HEK293 (cell line): ENCODE measurements at regions of chr17 and their contacts with region 1.

Region 1: GRCh38 chr17:39235555-39236449 is 10.1 kb upstream of the STAC2 start:
- H3K4me3 ChIP-seq: no peak overlapping the region
- H3K27ac ChIP-seq: no peak overlapping the region
- H3K4me1 ChIP-seq: peaks cover 10% of the 10 kb centered on the region
- CTCF ChIP-seq: peak; percentile 96

Region 2: GRCh38 chr17:39164675-39165143 is 71.1 kb before region 1 on chr17:
- CTCF ChIA-PET with region 1: interaction called, 16 read pairs
- POLR2A ChIA-PET with region 1: interaction called, 4 read pairs
- H3K4me3 ChIP-seq: no peak overlapping the region
- H3K27ac ChIP-seq: no peak overlapping the region
- H3K4me1 ChIP-seq: 0 out of 2 replicates have a peak, but pooled peaks cover 4% of the 10 kb centered on the region
- CTCF ChIP-seq: peak; percentile 90

Region 3: GRCh38 chr17:39174907-39175694 is 60.7 kb before region 1 on chr17:
- CTCF ChIA-PET with region 1: interaction called, 15 read pairs
- POLR2A ChIA-PET with region 1: no interaction called
- H3K4me3 ChIP-seq: no peak overlapping the region
- H3K27ac ChIP-seq: peak overlapping the region; percentile 11; the same call in 1 of the 2 replicates
- H3K4me1 ChIP-seq: 0 out of 2 replicates have a peak, but pooled peaks cover 7% of the 10 kb centered on the region
- CTCF ChIP-seq: peak; percentile 78

Region 4: DNA sequence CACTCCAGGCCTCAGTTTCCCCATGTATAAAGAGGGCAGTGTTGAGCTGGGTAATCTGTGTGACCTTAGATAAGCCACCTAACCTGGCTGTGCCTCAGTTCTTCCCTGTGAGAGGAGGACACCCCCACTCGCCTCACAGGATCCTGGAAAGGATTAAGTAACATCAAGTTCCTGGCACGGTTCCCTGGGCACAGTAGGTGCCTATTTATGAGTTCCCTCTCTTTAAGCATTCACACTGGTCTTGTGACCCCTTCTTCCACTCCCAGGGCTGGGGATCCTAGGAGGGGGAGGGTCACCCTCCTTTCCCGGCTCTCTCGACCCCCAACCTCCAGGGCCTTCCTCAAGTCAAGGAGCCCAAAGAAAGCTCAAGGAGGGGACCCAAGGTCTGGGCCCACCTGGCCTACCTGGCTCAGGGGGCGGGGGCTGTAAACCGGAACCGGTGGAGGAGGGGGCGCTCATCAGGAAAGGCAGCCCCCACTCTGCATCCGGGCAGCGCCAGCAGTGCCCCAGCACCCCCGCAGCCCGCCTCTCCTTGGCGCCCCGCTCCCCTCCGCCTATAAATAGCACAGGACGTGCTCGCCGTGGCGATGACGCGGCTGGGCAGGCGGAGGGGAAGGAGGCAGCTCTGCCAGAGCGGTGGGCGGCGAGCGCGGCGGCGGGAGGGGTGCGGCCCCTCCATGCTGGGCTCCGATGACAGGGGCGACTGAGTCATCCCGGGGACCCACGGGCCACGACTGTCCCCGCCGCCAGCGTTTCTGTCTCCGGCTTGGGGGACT is 26.3 kb before region 1 on chr17:
- CTCF ChIA-PET with region 1: interaction called, 733 read pairs
- POLR2A ChIA-PET with region 1: interaction called, 47 read pairs
- H3K4me3 ChIP-seq: peak overlapping the region; percentile 13
- H3K27ac ChIP-seq: peak overlapping the region; percentile 28; the same call in 1 of the 2 replicates
- H3K4me1 ChIP-seq: peaks cover 16% of the 10 kb centered on the region
- CTCF ChIP-seq: no peak

Region 5: GRCh38 chr17:39219647-39220154 is 16.1 kb before region 1 on chr17:
- CTCF ChIA-PET with region 1: interaction called, 733 read pairs
- POLR2A ChIA-PET with region 1: no interaction called
- H3K4me3 ChIP-seq: no peak overlapping the region
- H3K27ac ChIP-seq: no peak overlapping the region
- H3K4me1 ChIP-seq: no peaks in the 10 kb centered on the region
- CTCF ChIP-seq: no peak

Region 6: DNA sequence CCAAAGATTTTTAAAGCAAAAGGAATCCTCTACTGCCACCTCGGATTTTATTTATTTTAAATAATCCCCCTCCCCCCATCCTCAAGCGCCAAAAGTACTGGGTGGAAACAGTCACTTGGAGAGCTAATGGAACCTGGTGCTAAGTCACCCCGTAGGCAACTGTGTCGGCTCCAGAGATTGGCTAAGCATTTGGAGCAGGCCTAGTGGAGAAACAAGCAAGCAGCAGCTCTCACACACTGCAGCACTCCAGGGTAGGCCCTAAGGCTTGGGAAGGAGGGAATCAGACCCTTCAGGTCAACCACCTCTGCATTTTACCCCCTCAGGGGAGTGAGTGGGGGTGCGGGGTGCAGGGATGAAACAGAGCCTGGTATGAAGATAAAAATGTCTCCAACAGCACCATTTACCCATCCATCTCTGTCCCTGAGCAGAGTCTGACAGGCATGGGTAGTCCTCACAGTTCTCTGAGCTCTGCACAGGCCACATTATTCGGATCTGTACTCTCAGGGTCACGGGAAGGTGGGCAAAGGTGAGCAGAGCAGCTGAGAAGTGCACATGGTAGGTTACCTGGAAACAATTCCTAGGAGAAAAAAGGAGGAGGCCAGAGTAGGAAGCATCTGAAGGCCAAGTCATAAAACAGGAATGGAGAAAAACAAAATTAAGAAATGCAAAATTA is 17.1 kb after region 1 on chr17:
- CTCF ChIA-PET with region 1: interaction called, 132 read pairs
- POLR2A ChIA-PET with region 1: no interaction called
- H3K4me3 ChIP-seq: no peak overlapping the region
- H3K27ac ChIP-seq: no peak overlapping the region; the same call in 1 of the 2 replicates
- H3K4me1 ChIP-seq: peaks cover 21% of the 10 kb centered on the region
- CTCF ChIP-seq: no peak

Region 7: DNA sequence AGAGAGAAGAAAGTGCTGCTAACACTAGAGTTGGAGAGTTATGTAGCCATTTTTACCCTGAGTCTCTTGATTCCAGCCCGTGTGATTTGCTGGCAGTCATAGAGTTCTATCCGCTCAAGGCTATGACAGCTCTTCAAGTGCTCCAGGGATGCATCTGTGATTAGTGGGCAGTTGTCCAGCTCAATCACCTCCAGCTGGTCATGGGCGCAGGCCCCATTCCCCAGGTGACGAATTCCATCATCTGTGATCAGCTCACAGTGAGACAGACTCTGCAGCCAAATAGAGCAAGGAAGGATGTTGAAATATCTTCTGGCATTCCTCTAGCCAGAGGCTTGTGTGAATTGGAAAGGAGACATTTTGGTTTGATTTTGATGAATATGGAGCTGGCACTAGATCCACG is 28.3 kb after region 1 on chr17:
- CTCF ChIA-PET with region 1: interaction called, 14 read pairs
- POLR2A ChIA-PET with region 1: no interaction called
- H3K4me3 ChIP-seq: no peak overlapping the region
- H3K27ac ChIP-seq: no peak overlapping the region
- H3K4me1 ChIP-seq: no peaks in the 10 kb centered on the region
- CTCF ChIP-seq: no peak